ENCODE measurements at regions of chr2 and their contacts with region 1.

Region 1: GRCh38 chr2:46296840-46297545 is at the start of gene EPAS1:
- DNase-seq: peak; percentile 86
- ATAC-seq: peak; percentile 87
- H3K4me3 Mint-ChIP-seq: peak within 1 kb of the TSS; percentile 79
- H3K27ac Mint-ChIP-seq: peak within 1 kb of the TSS; percentile 47
- H3K4me1 Mint-ChIP-seq: peaks cover 16% of the 10 kb centered on the region
- H3K27me3 Mint-ChIP-seq: peaks cover 45% of the 10 kb centered on the region
- total RNA-seq, gene EPAS1: 12.6 to 16.0 TPM

Region 2: DNA sequence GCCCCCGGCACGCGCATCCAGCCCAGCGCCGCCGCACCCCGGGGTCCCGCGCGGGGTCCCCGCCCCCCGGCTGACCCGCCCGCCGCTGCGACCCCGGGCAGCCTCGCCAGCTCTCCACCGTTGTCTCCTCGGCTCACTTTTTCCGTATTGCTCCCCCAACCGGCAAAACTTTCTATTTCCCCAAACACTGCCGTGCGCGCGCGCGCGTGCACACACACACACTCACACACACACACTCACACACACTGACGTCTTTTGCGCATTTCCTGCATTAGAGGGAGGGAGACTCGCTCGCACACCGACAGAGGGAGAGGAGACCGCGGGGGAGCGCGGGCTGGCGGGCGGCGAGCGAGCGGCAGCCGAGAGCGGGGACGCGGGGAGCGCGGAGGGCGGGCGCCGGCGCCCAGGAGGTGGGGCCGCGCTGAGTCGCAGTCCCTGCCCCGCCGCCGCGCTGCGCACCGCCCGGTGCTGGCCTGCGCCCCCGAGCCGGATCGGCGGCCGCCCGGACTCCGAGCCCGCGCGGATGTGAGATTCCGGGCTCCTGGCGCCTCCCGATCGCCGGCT is 646.1 kb before region 1 on chr2:
- CTCF ChIA-PET with region 1: no interaction called
- POLR2A ChIA-PET with region 1: no interaction called
- intact Hi-C with region 1: loop called in 1 of 2 experiments (anchors 5 kb)
- DNase-seq: peak; percentile 94
- ATAC-seq: peak; percentile 85
- H3K4me3 Mint-ChIP-seq: peak overlapping the region; percentile 87
- H3K27ac Mint-ChIP-seq: peak overlapping the region; percentile 96
- H3K4me1 Mint-ChIP-seq: peaks cover 27% of the 10 kb centered on the region
- H3K27me3 Mint-ChIP-seq: peaks cover 6% of the 10 kb centered on the region

Region 3: DNA sequence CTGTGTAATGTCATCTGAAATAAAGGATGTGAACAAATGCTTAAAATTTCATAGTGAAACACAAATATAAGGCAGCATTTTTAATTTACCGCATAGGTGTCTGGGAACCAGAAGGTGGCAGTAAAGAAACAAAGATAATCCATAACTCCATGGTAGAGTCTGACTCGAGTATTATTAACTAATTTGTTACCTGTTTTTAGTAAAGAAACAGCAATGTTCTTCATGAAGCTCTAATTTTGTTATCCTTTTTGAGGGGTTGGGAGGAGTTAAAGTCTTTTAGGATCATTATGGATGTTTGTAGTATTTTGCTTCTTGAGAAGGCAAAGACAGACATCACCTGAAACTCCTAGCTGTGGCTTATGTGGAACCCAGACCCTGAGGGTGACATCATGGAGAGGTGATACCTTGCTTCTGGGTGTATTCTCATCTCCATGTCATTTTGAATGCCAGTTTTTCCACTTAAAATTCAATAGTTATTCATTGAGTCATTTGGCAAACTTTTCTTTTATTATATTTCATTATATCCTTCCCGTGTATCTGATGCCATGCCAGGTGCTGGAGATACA is 286.0 kb before region 1 on chr2:
- CTCF ChIA-PET with region 1: no interaction called
- POLR2A ChIA-PET with region 1: no interaction called
- intact Hi-C with region 1: loop called in 1 of 2 experiments (anchors 5 kb)
- DNase-seq: no peak
- ATAC-seq: peak; percentile 74
- H3K4me3 Mint-ChIP-seq: no peak overlapping the region
- H3K27ac Mint-ChIP-seq: no peak overlapping the region
- H3K4me1 Mint-ChIP-seq: no peaks in the 10 kb centered on the region
- H3K27me3 Mint-ChIP-seq: no peaks in the 10 kb centered on the region

Region 4: DNA sequence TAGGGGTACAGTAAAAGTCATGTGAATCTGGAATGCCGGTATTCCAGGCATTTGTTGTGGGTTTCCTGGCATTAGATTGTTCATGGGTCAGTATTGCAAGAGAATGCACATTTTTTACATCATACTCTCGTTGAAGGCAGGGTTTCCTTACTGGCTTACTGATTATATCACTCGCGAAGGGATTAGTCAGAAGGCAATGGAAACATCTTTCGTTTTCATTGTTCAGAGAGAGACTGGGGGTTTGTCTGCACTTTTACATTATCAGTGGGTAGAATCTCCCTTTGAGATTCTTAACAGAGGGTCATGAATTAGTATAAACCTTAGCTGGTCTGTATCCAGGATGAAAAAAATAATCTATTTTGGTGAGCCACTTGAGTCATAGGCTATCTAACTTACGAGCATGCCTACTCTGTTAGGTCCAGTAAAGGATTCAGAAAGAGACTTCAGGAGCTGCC is 229.1 kb before region 1 on chr2:
- CTCF ChIA-PET with region 1: interaction called, 6 read pairs
- POLR2A ChIA-PET with region 1: no interaction called
- intact Hi-C with region 1: loop called (anchors 1 to 5 kb)
- DNase-seq: no peak
- ATAC-seq: peak; percentile 86
- H3K4me3 Mint-ChIP-seq: no peak overlapping the region
- H3K27ac Mint-ChIP-seq: peak overlapping the region; percentile 48
- H3K4me1 Mint-ChIP-seq: peaks cover 25% of the 10 kb centered on the region
- H3K27me3 Mint-ChIP-seq: no peaks in the 10 kb centered on the region

Region 5: DNA sequence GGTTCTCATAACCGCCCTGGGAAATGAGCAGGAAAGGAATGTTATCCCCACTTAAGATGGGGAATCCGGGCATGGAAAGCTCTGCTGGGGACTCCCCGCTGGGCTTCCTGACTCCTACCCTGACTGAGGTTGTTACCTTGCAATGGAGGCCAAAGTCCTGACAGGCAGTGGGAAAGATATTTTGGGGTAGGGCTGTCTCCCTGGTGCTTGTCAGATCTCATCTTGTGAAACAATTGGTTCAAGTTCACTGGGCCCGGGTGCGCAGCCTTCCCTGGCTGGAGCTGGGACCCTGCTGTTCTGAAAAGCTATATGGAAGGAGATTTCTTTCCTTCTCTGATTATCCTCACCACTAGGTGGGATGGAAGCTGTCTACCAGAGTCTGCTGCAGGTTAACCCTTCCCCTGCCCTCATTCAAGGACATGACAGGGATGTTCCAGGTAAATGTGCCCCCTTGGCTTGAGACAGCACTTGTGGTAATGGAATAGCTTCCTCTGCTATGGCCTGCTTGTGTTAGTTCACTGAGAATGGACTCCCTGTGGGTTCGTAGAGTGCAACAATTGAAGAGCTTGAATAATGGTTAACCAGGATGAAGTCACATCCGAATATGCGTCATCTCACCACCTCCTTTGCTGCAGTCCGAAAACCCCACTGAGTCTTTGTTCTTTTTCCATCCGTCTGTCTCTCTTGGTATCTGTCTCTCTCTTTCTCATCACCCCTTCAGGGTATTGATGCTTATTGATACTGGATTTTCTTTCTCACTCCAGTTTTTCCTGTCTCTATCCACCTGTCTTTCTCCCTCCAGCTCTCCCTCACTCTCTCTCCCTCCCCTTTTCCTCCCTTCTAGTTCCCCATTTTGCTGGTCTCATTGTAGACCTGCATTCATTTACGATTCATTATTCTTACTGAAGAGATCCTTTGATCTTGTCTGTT is 67.6 kb before region 1 on chr2:
- CTCF ChIA-PET with region 1: no interaction called
- POLR2A ChIA-PET with region 1: no interaction called
- intact Hi-C with region 1: loop called in 1 of 2 experiments (anchors 2 kb)
- DNase-seq: peak; percentile 39
- ATAC-seq: peak; percentile 76
- H3K4me3 Mint-ChIP-seq: no peak overlapping the region
- H3K27ac Mint-ChIP-seq: peak overlapping the region; percentile 68
- H3K4me1 Mint-ChIP-seq: peaks cover 42% of the 10 kb centered on the region
- H3K27me3 Mint-ChIP-seq: no peaks in the 10 kb centered on the region

Region 6: GRCh38 chr2:46315103-46315890 is 18.3 kb after region 1 on chr2:
- CTCF ChIA-PET with region 1: no interaction called
- POLR2A ChIA-PET with region 1: no interaction called
- intact Hi-C with region 1: no loop called
- DNase-seq: peak; percentile 59
- ATAC-seq: peak; percentile 91
- H3K4me3 Mint-ChIP-seq: no peak overlapping the region
- H3K27ac Mint-ChIP-seq: no peak overlapping the region
- H3K4me1 Mint-ChIP-seq: peaks cover 19% of the 10 kb centered on the region
- H3K27me3 Mint-ChIP-seq: no peaks in the 10 kb centered on the region

Region 7: DNA sequence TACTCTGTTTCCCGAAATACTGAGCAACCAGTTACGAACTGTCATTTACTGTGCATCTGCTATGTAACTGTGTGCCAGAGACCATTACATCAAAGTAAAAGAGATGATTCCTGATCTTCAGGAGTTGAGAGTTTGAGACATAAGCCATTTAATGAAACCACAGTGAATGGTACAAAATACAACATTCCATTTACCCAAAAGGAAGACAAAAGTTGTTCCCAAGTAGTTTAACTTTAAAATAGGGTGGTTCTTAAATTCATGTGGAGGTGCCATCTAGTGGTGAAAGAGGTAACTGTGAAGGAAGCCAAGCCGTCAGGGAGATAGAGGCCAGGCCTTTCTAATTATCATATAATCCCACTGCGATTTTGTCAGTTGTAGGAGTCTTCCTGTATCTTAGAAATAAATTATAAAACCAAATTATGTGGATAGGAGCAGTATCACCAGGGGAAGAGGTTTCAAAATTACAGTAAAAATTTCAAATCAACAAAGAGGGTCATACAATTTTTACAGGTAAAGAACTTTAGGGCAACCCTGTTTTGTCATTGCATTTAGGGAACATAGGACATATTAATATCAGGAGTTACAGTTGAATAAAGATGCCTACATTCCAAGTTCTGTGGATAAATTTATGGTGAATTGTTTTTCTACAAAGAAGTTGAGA is 67.9 kb after region 1 on chr2:
- CTCF ChIA-PET with region 1: interaction called, 3 read pairs
- POLR2A ChIA-PET with region 1: no interaction called
- intact Hi-C with region 1: loop called (anchors 2 to 5 kb)
- DNase-seq: peak; percentile 49
- ATAC-seq: no peak
- H3K4me3 Mint-ChIP-seq: no peak overlapping the region
- H3K27ac Mint-ChIP-seq: no peak overlapping the region
- H3K4me1 Mint-ChIP-seq: peaks cover 31% of the 10 kb centered on the region
- H3K27me3 Mint-ChIP-seq: no peaks in the 10 kb centered on the region

Region 8: GRCh38 chr2:46385786-46386577 is 89.0 kb after region 1 on chr2:
- CTCF ChIA-PET with region 1: no interaction called
- POLR2A ChIA-PET with region 1: no interaction called
- intact Hi-C with region 1: no loop called
- DNase-seq: no peak
- ATAC-seq: no peak
- H3K4me3 Mint-ChIP-seq: no peak overlapping the region
- H3K27ac Mint-ChIP-seq: no peak overlapping the region
- H3K4me1 Mint-ChIP-seq: no peaks in the 10 kb centered on the region
- H3K27me3 Mint-ChIP-seq: peaks cover 2% of the 10 kb centered on the region

Measured in activated CD4-positive, alpha-beta T cell treated with anti-CD3 and anti-CD28 coated beads for 36 hours (primary cell).